CD4-positive, alpha-beta memory T cell (primary cell): ENCODE measurements at regions of chr20 and their contacts with region 1.

Region 1: DNA sequence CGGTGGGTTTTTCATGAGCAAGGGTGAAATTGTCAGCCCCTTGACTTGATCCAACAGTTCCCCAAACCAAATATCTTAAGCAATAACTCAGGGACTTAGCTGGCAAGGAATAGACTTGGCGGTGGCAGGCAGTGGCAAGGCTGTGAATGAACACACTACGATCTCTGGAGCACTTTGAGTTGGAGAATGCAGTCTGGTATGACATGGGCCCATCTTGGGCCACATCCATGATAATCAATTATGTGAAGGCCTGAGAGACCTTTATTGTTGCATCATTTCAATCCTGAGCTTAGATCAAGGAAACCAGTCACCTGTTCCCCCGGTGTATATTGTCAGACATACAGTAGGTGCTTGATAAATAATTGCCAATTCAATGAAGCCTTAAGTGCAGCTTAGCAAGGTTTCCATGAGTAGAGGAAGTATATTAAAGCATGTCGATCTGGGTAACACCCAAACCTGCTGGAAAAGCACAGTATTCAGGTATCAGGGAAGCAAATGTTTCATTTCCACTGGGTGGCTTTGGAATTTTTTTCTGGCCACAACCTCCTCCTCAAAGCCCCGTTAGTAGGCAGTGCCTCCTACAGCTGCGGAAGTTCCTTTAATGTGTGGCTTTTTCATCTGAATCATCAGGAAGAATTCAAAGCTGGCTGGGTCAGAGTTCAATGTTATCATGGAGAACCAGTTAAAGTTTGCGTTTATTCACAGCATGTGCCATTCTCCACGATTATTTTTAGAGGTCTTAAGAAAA is 10.2 kb downstream of the CASS4 start:
- DNase-seq: no peak
- H3K4me3 ChIP-seq: no peak overlapping the region
- H3K4me3 Mint-ChIP-seq: peak overlapping the region in 7 of 8 donors; percentile 9 to 81 (median 50)
- H3K27ac ChIP-seq: peak overlapping the region; percentile 17
- H3K27ac Mint-ChIP-seq: peak overlapping the region; percentile 84 to 97 (median 91)
- H3K4me1 ChIP-seq: peaks cover 66% of the 10 kb centered on the region
- H3K4me1 Mint-ChIP-seq: peaks cover 41 to 81% (median 58%) of the 10 kb centered on the region in 4 donors
- H3K27me3 ChIP-seq: no peaks in the 10 kb centered on the region
- H3K27me3 Mint-ChIP-seq: no peaks in the 10 kb centered on the region

Region 2: GRCh38 chr20:56202493-56203077 is 219.7 kb before region 1 on chr20:
- CTCF ChIA-PET with region 1: no interaction called
- POLR2A ChIA-PET with region 1: no interaction called
- intact Hi-C with region 1: no loop called
- DNase-seq: no peak
- H3K4me3 ChIP-seq: no peak overlapping the region
- H3K4me3 Mint-ChIP-seq: no peak overlapping the region
- H3K27ac ChIP-seq: no peak overlapping the region
- H3K27ac Mint-ChIP-seq: no peak overlapping the region
- H3K4me1 ChIP-seq: no peaks in the 10 kb centered on the region
- H3K4me1 Mint-ChIP-seq: no peaks in the 10 kb centered on the region
- H3K27me3 ChIP-seq: peaks cover 3% of the 10 kb centered on the region
- H3K27me3 Mint-ChIP-seq: peaks cover 1 to 3% of the 10 kb centered on the region in 2 donors

Region 3: DNA sequence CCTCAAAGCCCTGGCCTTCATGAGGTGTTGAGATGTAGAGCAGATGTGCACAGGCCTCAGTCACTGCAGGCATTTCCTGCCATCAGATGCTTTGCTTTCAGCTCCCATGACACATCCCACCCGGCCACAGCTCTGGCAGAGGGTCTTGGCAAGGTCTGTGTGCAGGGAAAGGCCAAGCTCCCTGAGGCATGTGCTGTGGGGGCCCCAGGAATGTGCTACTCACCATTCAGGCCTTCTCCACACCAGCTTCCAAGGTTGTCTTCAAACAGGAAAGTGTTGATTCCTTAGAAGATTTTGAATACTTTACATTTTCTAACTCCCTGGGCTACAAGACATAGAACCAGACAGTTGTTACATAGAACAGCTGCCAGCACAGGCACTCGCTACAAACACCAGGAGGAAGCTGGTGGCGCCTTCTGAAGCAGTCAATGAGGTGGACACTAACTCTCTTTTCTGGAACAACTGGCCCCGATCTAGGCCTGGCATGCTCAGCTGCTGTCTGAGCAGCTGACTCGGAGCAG is 17.6 kb after region 1 on chr20:
- CTCF ChIA-PET with region 1: interaction called, 4 read pairs
- POLR2A ChIA-PET with region 1: interaction called, 16 read pairs
- intact Hi-C with region 1: loop called (anchors 2 kb)
- DNase-seq: no peak
- H3K4me3 ChIP-seq: no peak overlapping the region
- H3K4me3 Mint-ChIP-seq: peak overlapping the region; percentile 31 to 89 (median 73)
- H3K27ac ChIP-seq: peak overlapping the region; percentile 5
- H3K27ac Mint-ChIP-seq: peak overlapping the region; percentile 86 to 94 (median 89)
- H3K4me1 ChIP-seq: peaks cover 53% of the 10 kb centered on the region
- H3K4me1 Mint-ChIP-seq: peaks cover 31 to 71% (median 50%) of the 10 kb centered on the region in 4 donors
- H3K27me3 ChIP-seq: no peaks in the 10 kb centered on the region
- H3K27me3 Mint-ChIP-seq: no peaks in the 10 kb centered on the region

Region 4: GRCh38 chr20:56698749-56699148 is 276.5 kb after region 1 on chr20:
- CTCF ChIA-PET with region 1: no interaction called
- POLR2A ChIA-PET with region 1: no interaction called
- intact Hi-C with region 1: no loop called
- DNase-seq: no peak
- H3K4me3 ChIP-seq: no peak overlapping the region
- H3K4me3 Mint-ChIP-seq: no peak overlapping the region
- H3K27ac ChIP-seq: no peak overlapping the region
- H3K27ac Mint-ChIP-seq: no peak overlapping the region
- H3K4me1 ChIP-seq: no peaks in the 10 kb centered on the region
- H3K4me1 Mint-ChIP-seq: no peaks in the 10 kb centered on the region
- H3K27me3 ChIP-seq: no peaks in the 10 kb centered on the region
- H3K27me3 Mint-ChIP-seq: peaks cover 2 to 7% of the 10 kb centered on the region in 2 donors